ENCODE measurements at regions of chr1 and their contacts with region 1.

Region 1: GRCh38 chr1:39799770-39800470 is 11.3 kb upstream of the BMP8B start:
- DNase-seq: peak; percentile 64
- ATAC-seq: peak; percentile 68
- H3K4me3 Mint-ChIP-seq: peak overlapping the region; percentile 81
- H3K27ac Mint-ChIP-seq: peak overlapping the region; percentile 93
- H3K4me1 Mint-ChIP-seq: peaks cover 11% of the 10 kb centered on the region
- H3K27me3 Mint-ChIP-seq: no peaks in the 10 kb centered on the region
- CTCF ChIP-seq: no peak

Region 2: GRCh38 chr1:39711104-39711965 is 88.6 kb before region 1 on chr1:
- CTCF ChIA-PET with region 1: no interaction called
- POLR2A ChIA-PET with region 1: no interaction called
- intact Hi-C with region 1: no loop called
- DNase-seq: no peak
- ATAC-seq: no peak
- H3K4me3 Mint-ChIP-seq: no peak overlapping the region
- H3K27ac Mint-ChIP-seq: no peak overlapping the region
- H3K4me1 Mint-ChIP-seq: no peaks in the 10 kb centered on the region
- H3K27me3 Mint-ChIP-seq: peaks cover 23% of the 10 kb centered on the region
- CTCF ChIP-seq: no peak

Region 3: GRCh38 chr1:39754906-39755504 is 44.9 kb before region 1 on chr1:
- CTCF ChIA-PET with region 1: no interaction called
- POLR2A ChIA-PET with region 1: no interaction called
- intact Hi-C with region 1: no loop called
- DNase-seq: no peak
- ATAC-seq: no peak
- H3K4me3 Mint-ChIP-seq: no peak overlapping the region
- H3K27ac Mint-ChIP-seq: no peak overlapping the region
- H3K4me1 Mint-ChIP-seq: no peaks in the 10 kb centered on the region
- H3K27me3 Mint-ChIP-seq: no peaks in the 10 kb centered on the region
- CTCF ChIP-seq: no peak

Region 4: GRCh38 chr1:39788758-39789570 is 11.0 kb before region 1 on chr1 and contains the start of gene BMP8B:
- CTCF ChIA-PET with region 1: interaction called, 7 read pairs
- POLR2A ChIA-PET with region 1: interaction called, 35 read pairs
- intact Hi-C with region 1: loop called (anchors 1 kb)
- DNase-seq: peak; percentile 70
- ATAC-seq: peak; percentile 85
- H3K4me3 Mint-ChIP-seq: peak within 1 kb of the TSS; percentile 81
- H3K27ac Mint-ChIP-seq: peak within 1 kb of the TSS; percentile 79
- H3K4me1 Mint-ChIP-seq: peaks cover 19% of the 10 kb centered on the region
- H3K27me3 Mint-ChIP-seq: peaks cover 3% of the 10 kb centered on the region
- CTCF ChIP-seq: no peak
- total RNA-seq, gene BMP8B: 1.2 and 1.4 TPM in 2 replicates

Region 5: DNA sequence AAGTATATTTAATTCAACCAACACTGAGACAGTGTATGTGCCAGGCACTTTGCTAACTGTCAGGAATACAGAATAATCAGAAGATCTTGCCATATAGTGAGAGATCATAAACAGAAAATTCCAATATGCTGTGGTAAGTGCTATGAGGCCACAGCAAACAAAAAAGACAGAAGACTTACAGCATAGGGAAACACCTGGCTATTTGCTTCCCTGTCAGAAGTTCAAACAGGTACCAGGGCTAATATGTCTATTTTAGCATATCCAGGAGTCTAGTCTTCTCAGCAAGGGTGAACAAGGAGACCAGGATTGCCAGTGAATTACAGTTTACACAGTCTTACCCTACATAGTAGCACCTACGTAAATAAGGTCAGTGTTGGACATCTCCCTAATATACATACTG is 53.0 kb after region 1 on chr1:
- CTCF ChIA-PET with region 1: no interaction called
- POLR2A ChIA-PET with region 1: no interaction called
- intact Hi-C with region 1: no loop called
- DNase-seq: no peak
- ATAC-seq: no peak
- H3K4me3 Mint-ChIP-seq: no peak overlapping the region
- H3K27ac Mint-ChIP-seq: no peak overlapping the region
- H3K4me1 Mint-ChIP-seq: no peaks in the 10 kb centered on the region
- H3K27me3 Mint-ChIP-seq: no peaks in the 10 kb centered on the region
- CTCF ChIP-seq: no peak